ENCODE measurements at regions of chrX and their contacts with region 1.

Region 1: GRCh38 chrX:7996414-7996813 is 69.2 kb upstream of the PNPLA4 start:
- DNase-seq: peak; percentile 10
- H3K4me3 Mint-ChIP-seq: no peak overlapping the region
- H3K27ac Mint-ChIP-seq: no peak overlapping the region
- H3K4me1 Mint-ChIP-seq: no peaks in the 10 kb centered on the region
- H3K27me3 Mint-ChIP-seq: no peaks in the 10 kb centered on the region
- CTCF ChIP-seq: no peak

Region 2: DNA sequence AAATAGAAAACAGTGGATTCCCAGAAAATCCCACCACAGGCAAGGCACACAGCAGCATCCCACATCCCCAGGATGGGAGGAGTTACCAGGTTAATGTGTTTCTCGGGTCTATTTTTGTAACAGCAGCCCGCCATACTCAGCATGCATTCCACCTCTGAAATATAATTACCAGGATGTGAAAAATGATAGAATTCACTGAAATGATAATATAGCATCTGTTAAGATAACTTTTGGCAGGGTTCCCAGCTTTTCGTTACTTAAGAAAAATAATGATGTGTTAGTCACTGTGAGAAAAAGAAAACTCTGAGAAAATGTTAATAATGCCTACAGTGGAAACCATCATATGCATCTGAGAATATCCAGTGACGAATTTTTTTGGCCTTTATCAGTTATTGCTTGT is 87.6 kb after region 1 on chrX:
- CTCF ChIA-PET with region 1: no interaction called
- intact Hi-C with region 1: no loop called
- DNase-seq: no peak
- H3K4me3 Mint-ChIP-seq: no peak overlapping the region
- H3K27ac Mint-ChIP-seq: no peak overlapping the region
- H3K4me1 Mint-ChIP-seq: no peaks in the 10 kb centered on the region
- H3K27me3 Mint-ChIP-seq: no peaks in the 10 kb centered on the region
- CTCF ChIP-seq: no peak

Region 3: GRCh38 chrX:8743126-8743732 is 746.8 kb after region 1 on chrX:
- CTCF ChIA-PET with region 1: interaction called, 3 read pairs
- intact Hi-C with region 1: loop called (anchors 1 kb)
- DNase-seq: peak; percentile 76
- H3K4me3 Mint-ChIP-seq: no peak overlapping the region
- H3K27ac Mint-ChIP-seq: no peak overlapping the region
- H3K4me1 Mint-ChIP-seq: no peaks in the 10 kb centered on the region
- H3K27me3 Mint-ChIP-seq: peaks cover 30% of the 10 kb centered on the region
- CTCF ChIP-seq: peak; percentile 77

Measured in Calu3 (cell line).